Motor neuron (in vitro differentiated cells): ENCODE measurements at regions of chr16 and their contacts with region 1.

Region 1: DNA sequence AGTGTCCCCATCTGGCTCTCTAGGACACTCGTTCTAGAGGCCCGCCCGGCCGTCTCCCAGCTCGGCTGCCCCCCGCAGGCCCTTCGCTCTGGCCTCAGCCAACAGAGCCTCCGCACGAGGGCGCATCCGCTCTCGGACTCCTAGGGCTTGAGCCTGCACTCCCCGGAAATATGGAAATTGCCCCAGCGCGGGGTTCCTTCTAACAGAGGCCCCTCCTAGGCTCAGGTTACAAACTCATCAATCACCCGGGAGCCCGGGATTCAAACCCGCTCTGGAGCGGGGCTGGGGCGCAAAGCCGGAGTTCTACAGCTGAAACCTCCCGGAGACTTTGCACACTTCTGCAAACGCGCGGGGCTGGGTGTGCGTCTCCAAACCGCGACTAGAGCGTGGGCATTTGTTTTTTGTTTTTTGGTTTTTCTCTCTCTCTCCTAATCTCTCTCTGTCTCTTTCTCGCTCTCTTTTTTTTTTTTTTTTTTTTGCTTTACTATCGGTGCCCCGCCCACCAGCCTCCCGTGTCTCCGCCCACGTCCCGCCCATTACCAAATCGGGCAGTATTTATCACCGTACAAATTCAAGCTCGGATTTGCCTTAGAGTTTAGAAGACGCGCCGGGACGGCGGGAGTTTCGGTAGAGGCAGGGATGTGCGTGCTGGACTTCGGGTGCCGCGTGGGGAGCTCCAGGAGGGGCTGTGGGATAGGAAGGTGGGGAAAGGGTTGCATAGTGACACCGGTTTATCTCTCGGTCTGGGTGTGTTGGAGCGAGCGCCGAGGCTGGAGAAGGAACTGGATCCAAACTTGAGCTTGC is 2.4 kb upstream of the FOXL1 start:
- ATAC-seq: peak; percentile 73 to 95 (median 92)
- H3K4me3 ChIP-seq: peak overlapping the region; percentile 8 to 35 (median 27)
- H3K27ac ChIP-seq: no peak overlapping the region
- H3K4me1 ChIP-seq: peaks cover 0 to 15% of the 10 kb centered on the region in 2 donors

Region 2: GRCh38 chr16:86761111-86762031 is 185.4 kb after region 1 on chr16:
- in situ Hi-C with region 1: loop called in 1 of 9 experiments (anchors 25 kb)
- ATAC-seq: peak; percentile 55 to 94 (median 82)
- H3K4me3 ChIP-seq: no peak overlapping the region
- H3K27ac ChIP-seq: no peak overlapping the region
- H3K4me1 ChIP-seq: peaks cover 12% of the 10 kb centered on the region in 2 donors

Region 3: GRCh38 chr16:86823895-86824671 is 248.1 kb after region 1 on chr16:
- in situ Hi-C with region 1: loop called in 1 of 9 experiments (anchors 25 kb)
- ATAC-seq: no peak
- H3K4me3 ChIP-seq: no peak overlapping the region
- H3K27ac ChIP-seq: no peak overlapping the region
- H3K4me1 ChIP-seq: peaks cover 10 to 11% of the 10 kb centered on the region in 2 donors

Region 4: GRCh38 chr16:86931399-86931941 is 355.5 kb after region 1 on chr16:
- in situ Hi-C with region 1: no loop called
- ATAC-seq: peak in 6 of 8 experiments; percentile 53 to 82 (median 59)
- H3K4me3 ChIP-seq: no peak overlapping the region
- H3K27ac ChIP-seq: no peak overlapping the region
- H3K4me1 ChIP-seq: peaks cover 10 to 16% of the 10 kb centered on the region in 2 donors